Sciatic nerve (tissue), 2 donors: ENCODE measurements at regions of chr1 and their contacts with region 1.

Region 1: GRCh38 chr1:248807067-248807737 is 18.5 kb downstream of the SH3BP5L start:
- DNase-seq: peak; percentile 76
- ATAC-seq: peak; percentile 75

Region 2: DNA sequence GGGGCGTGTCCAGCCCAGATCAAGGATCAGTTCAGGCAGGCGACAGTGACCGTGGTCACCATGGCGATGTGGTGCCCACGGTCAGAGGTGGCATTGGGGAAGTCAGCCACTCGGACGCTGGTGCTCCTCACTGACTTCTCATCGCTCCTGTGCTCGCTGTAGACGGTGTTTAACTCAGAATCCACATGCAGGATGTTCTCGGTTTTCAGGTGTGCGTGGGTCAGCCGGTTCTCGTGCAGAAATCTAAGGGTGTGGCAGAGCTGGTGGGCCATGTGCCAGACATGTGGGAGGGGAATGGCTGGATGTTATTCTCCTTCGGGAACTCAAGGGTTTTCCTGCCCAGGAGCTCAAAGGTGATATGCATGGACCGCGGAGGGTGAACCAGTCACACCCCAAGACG is 870.8 kb before region 1 on chr1:
- intact Hi-C with region 1: loop called (anchors 5 kb)
- DNase-seq: no peak
- ATAC-seq: no peak